ENCODE measurements at regions of chr10 and their contacts with region 1.

Region 1: DNA sequence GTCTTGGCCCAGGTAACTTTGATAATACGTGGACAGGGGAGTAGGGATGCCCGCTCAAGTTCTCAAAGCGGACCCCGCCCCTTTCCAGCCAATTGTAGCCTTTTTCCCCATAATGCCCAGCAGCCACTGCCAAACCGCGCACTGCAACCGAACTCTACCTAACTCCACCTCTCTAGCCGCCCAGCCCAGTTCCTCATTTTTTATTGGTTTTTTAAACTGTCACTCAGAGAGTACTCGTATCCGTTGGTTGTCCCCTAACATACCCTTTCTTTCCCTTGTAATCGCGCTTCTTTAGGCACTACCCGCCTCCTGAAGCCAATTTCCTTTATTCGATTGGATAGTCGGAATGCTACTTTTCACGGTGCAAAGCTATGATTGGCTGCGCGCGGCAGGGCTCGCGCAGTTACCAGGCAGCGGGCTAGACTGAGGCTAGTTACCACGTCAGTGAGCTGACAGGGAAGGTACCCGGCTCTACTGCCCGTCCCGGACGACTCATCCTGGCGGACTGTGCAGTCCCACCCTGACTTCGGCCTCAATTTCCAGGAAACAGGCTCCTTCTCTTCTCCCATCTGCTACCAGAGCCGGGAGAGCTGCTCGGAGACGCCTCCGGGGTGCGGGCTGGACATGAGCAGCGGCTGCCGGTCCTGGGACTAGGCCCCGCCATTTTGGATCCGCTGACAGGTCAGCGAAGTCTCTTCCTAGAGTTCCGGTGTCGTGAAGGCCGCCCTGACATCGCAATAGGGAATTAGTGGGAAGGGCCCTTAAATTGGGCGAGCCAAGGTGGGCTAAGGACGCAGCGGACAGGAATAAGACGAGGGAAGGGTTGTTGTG is at the start of gene GBF1:
- H3K4me3 Mint-ChIP-seq: peak within 1 kb of the TSS; percentile 92
- H3K27ac Mint-ChIP-seq: peak within 1 kb of the TSS; percentile 89
- H3K4me1 Mint-ChIP-seq: peaks cover 46% of the 10 kb centered on the region
- H3K27me3 Mint-ChIP-seq: peaks cover 27% of the 10 kb centered on the region

Region 2: GRCh38 chr10:101353692-101354327 is 891.5 kb before region 1 on chr10 and contains the start of gene BTRC:
- intact Hi-C with region 1: loop called (anchors 10 kb)
- H3K4me3 Mint-ChIP-seq: peak within 1 kb of the TSS; percentile 91
- H3K27ac Mint-ChIP-seq: peak within 1 kb of the TSS; percentile 90
- H3K4me1 Mint-ChIP-seq: peaks cover 12% of the 10 kb centered on the region
- H3K27me3 Mint-ChIP-seq: peaks cover 17% of the 10 kb centered on the region

Region 3: DNA sequence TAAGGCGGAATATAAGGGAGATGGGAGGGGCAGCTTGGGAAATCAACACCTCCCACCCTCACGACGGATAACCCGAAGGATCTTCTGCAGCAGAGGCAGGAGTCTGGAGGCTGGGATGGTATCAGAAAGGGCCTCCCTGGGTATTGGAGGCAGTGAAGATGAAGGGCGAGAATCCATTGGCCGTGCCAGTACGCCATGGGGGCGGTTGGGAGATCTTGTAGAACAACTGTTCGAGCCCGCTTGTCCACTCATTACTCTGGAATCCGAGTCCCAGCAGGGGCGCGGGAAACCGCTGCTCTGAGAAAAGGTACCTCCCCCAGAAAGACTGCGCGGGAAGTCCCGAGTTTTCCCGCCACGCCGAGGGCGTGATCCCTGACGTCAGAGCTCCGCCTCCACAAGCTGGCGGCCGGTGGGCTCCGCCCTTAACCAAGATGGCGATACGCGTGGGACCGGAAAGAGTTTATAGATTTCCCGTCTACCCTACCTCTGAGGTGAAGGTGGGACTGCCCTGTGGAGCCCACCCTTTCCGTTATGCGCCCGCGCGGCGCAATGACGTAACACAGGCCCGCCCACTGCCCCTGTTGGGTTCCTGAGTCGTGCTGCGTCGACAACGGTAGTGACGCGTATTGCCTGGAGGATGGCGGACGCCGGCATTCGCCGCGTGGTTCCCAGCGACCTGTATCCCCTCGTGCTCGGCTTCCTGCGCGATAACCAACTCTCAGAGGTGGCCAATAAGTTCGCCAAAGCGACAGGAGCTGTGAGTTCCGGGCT is 93.4 kb before region 1 on chr10 and contains the start of gene NOLC1:
- intact Hi-C with region 1: loop called (anchors 5 kb)
- H3K4me3 Mint-ChIP-seq: peak within 1 kb of the TSS; percentile 91
- H3K27ac Mint-ChIP-seq: peak within 1 kb of the TSS; percentile 91
- H3K4me1 Mint-ChIP-seq: peaks cover 30% of the 10 kb centered on the region
- H3K27me3 Mint-ChIP-seq: no peaks in the 10 kb centered on the region

Measured in dendritic cell treated with granulocyte-macrophage colony-stimulating factor and Interleukin-4, amounts not matched to agents 40 ng/mL and 50 ng/mL, for 4 days (primary cell).